Activated CD8-positive, alpha-beta T cell treated with anti-CD3 and anti-CD28 coated beads for 36 hours (primary cell): ENCODE measurements at regions of chr12 and their contacts with region 1.

Region 1: GRCh38 chr12:96194971-96195844 is 1.0 kb downstream of the ELK3 start:
- DNase-seq: peak; percentile 85
- ATAC-seq: peak; percentile 72
- H3K4me3 Mint-ChIP-seq: peak overlapping the region; percentile 82
- H3K27ac Mint-ChIP-seq: peak overlapping the region; percentile 95
- H3K4me1 Mint-ChIP-seq: peaks cover 58% of the 10 kb centered on the region
- H3K27me3 Mint-ChIP-seq: no peaks in the 10 kb centered on the region
- CTCF ChIP-seq: no peak

Region 2: GRCh38 chr12:96047229-96048211 is 147.7 kb before region 1 on chr12:
- CTCF ChIA-PET with region 1: no interaction called
- POLR2A ChIA-PET with region 1: interaction called, 3 read pairs
- intact Hi-C with region 1: loop called (anchors 5 kb)
- DNase-seq: peak; percentile 28
- ATAC-seq: peak; percentile 78
- H3K4me3 Mint-ChIP-seq: peak overlapping the region; percentile 31
- H3K27ac Mint-ChIP-seq: peak overlapping the region; percentile 90
- H3K4me1 Mint-ChIP-seq: peaks cover 39% of the 10 kb centered on the region
- H3K27me3 Mint-ChIP-seq: no peaks in the 10 kb centered on the region
- CTCF ChIP-seq: no peak

Region 3: GRCh38 chr12:96155781-96156180 is 39.4 kb before region 1 on chr12:
- CTCF ChIA-PET with region 1: no interaction called
- POLR2A ChIA-PET with region 1: no interaction called
- intact Hi-C with region 1: no loop called
- DNase-seq: no peak
- ATAC-seq: no peak
- H3K4me3 Mint-ChIP-seq: no peak overlapping the region
- H3K27ac Mint-ChIP-seq: no peak overlapping the region
- H3K4me1 Mint-ChIP-seq: no peaks in the 10 kb centered on the region
- H3K27me3 Mint-ChIP-seq: no peaks in the 10 kb centered on the region
- CTCF ChIP-seq: no peak

Region 4: DNA sequence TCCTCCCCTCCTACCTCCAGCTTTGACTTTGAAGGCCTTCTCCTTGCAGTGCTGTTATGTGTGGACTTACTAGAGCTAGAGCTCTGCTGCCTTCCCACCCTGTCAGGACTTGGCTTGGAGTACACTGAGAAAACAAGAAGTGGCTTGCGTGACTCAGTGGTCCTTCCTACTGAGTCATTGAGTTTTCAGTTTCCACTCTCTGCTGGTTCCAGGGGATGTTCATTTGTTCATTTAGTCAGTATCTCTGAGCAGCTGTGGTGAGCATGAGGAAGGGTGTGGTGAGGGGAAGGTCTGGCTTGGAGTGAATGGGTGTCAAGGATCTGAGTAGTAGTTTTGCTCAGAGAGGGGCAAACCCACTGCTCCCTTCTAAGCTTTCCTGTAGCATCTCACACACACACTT is 18.2 kb before region 1 on chr12:
- CTCF ChIA-PET with region 1: interaction called, 6 read pairs
- POLR2A ChIA-PET with region 1: interaction called, 13 read pairs
- intact Hi-C with region 1: loop called (anchors 1 kb)
- DNase-seq: peak; percentile 91
- ATAC-seq: peak; percentile 97
- H3K4me3 Mint-ChIP-seq: peak overlapping the region; percentile 7
- H3K27ac Mint-ChIP-seq: peak overlapping the region; percentile 86
- H3K4me1 Mint-ChIP-seq: peaks cover 31% of the 10 kb centered on the region
- H3K27me3 Mint-ChIP-seq: no peaks in the 10 kb centered on the region
- CTCF ChIP-seq: no peak

Region 5: GRCh38 chr12:96208801-96209549 is 13.8 kb after region 1 on chr12:
- CTCF ChIA-PET with region 1: interaction called, 39 read pairs
- POLR2A ChIA-PET with region 1: interaction called, 7 read pairs
- intact Hi-C with region 1: loop called (anchors 2 kb)
- DNase-seq: no peak
- ATAC-seq: no peak
- H3K4me3 Mint-ChIP-seq: peak overlapping the region; percentile 9
- H3K27ac Mint-ChIP-seq: peak overlapping the region; percentile 43
- H3K4me1 Mint-ChIP-seq: peaks cover 90% of the 10 kb centered on the region
- H3K27me3 Mint-ChIP-seq: no peaks in the 10 kb centered on the region
- CTCF ChIP-seq: no peak